Endothelial cell of umbilical vein (primary cell): ENCODE measurements at regions of chr12 and their contacts with region 1.

Region 1: GRCh38 chr12:117857632-117858612 is 110.9 kb downstream of the KSR2 start:
- DNase-seq: peak; percentile 58
- H3K4me3 ChIP-seq: no peak overlapping the region
- H3K27ac ChIP-seq: no peak overlapping the region
- H3K4me1 ChIP-seq: no peaks in the 10 kb centered on the region
- H3K27me3 ChIP-seq: no peaks in the 10 kb centered on the region
- CTCF ChIP-seq: peak; percentile 61 to 72
- POLR2A ChIP-seq: no peak

Region 2: GRCh38 chr12:117212563-117213190 is 645.2 kb before region 1 on chr12:
- CTCF ChIA-PET with region 1: interaction called, 60 read pairs
- POLR2A ChIA-PET with region 1: no interaction called
- dilution Hi-C with region 1: no loop called
- intact Hi-C with region 1: loop called (anchors 1 kb)
- DNase-seq: peak; percentile 70
- H3K4me3 ChIP-seq: no peak overlapping the region
- H3K27ac ChIP-seq: no peak overlapping the region
- H3K4me1 ChIP-seq: no peaks in the 10 kb centered on the region
- H3K27me3 ChIP-seq: peaks cover 0 to 2% of the 10 kb centered on the region in 2 experiments
- CTCF ChIP-seq: peak; percentile 82 to 86
- POLR2A ChIP-seq: no peak

Region 3: GRCh38 chr12:117236456-117237001 is 621.4 kb before region 1 on chr12:
- CTCF ChIA-PET with region 1: interaction called, 147 read pairs
- POLR2A ChIA-PET with region 1: no interaction called
- dilution Hi-C with region 1: no loop called
- intact Hi-C with region 1: loop called (anchors 1 kb)
- DNase-seq: peak; percentile 45
- H3K4me3 ChIP-seq: no peak overlapping the region
- H3K27ac ChIP-seq: no peak overlapping the region
- H3K4me1 ChIP-seq: no peaks in the 10 kb centered on the region
- H3K27me3 ChIP-seq: no peaks in the 10 kb centered on the region
- CTCF ChIP-seq: peak; percentile 78 to 91
- POLR2A ChIP-seq: no peak

Region 4: DNA sequence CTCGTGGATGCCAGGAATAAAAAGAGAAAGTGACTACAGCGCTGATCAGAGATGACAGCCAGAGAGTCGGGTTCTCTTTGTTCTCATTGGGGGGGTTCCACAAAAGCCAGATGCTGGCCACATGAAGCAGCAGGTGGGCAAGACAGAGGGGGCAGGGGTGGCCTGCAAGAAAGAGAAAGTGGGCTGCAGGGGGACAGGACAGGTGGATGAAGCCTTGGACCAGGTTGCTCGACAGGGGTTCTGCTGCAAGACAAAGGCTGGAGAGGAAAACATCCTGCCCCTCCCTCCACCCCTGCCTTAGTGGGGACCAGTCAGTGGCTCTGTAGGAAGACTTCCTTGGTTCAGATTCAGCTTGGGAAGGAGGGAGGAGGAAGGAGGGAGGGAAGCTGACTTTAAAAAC is 15.3 kb before region 1 on chr12:
- CTCF ChIA-PET with region 1: interaction called, 31 read pairs
- POLR2A ChIA-PET with region 1: no interaction called
- dilution Hi-C with region 1: no loop called
- intact Hi-C with region 1: no loop called
- DNase-seq: no peak
- H3K4me3 ChIP-seq: no peak overlapping the region
- H3K27ac ChIP-seq: no peak overlapping the region
- H3K4me1 ChIP-seq: no peaks in the 10 kb centered on the region
- H3K27me3 ChIP-seq: peaks cover under 1 to 3% of the 10 kb centered on the region in 2 experiments
- CTCF ChIP-seq: no peak
- POLR2A ChIP-seq: no peak

Region 5: GRCh38 chr12:117874842-117875434 is 17.0 kb after region 1 on chr12:
- CTCF ChIA-PET with region 1: interaction called, 45 read pairs
- POLR2A ChIA-PET with region 1: no interaction called
- dilution Hi-C with region 1: no loop called
- intact Hi-C with region 1: no loop called
- DNase-seq: peak; percentile 56
- H3K4me3 ChIP-seq: no peak overlapping the region
- H3K27ac ChIP-seq: no peak overlapping the region
- H3K4me1 ChIP-seq: no peaks in the 10 kb centered on the region
- H3K27me3 ChIP-seq: peaks cover 4 to 5% of the 10 kb centered on the region in 2 experiments
- CTCF ChIP-seq: peak; percentile 79 to 83
- POLR2A ChIP-seq: no peak